Activated T-helper 2 cell treated with anti-CD3 and anti-CD28 coated beads, Interferon-gamma antibody, Interleukin-2, Interleukin-4, amounts not matched to agents 10 μg/mL and 5 μg/mL and 100 μg/mL, durations not matched to agents 14 hours and 24 hours and 36 hours (primary cell): ENCODE measurements at regions of chr7 and their contacts with region 1.

Region 1: GRCh38 chr7:106887421-106887820 is 22.3 kb downstream of the PIK3CG start:
- DNase-seq: no peak
- H3K4me3 Mint-ChIP-seq: no peak overlapping the region
- H3K27ac Mint-ChIP-seq: peak overlapping the region; percentile 74
- H3K4me1 Mint-ChIP-seq: peaks cover 26% of the 10 kb centered on the region
- H3K27me3 Mint-ChIP-seq: no peaks in the 10 kb centered on the region

Region 2: GRCh38 chr7:106865130-106866041 is 22.0 kb before region 1 on chr7 and contains the start of gene PIK3CG:
- intact Hi-C with region 1: loop called (anchors 1 kb)
- DNase-seq: peak; percentile 16
- H3K4me3 Mint-ChIP-seq: peak within 1 kb of the TSS; percentile 91
- H3K27ac Mint-ChIP-seq: peak within 1 kb of the TSS; percentile 85
- H3K4me1 Mint-ChIP-seq: peaks cover 41% of the 10 kb centered on the region
- H3K27me3 Mint-ChIP-seq: no peaks in the 10 kb centered on the region
- total RNA-seq, gene PIK3CG: 36.6 and 36.7 TPM in 2 replicates